ENCODE measurements at regions of chr14 and their contacts with region 1.

Region 1: DNA sequence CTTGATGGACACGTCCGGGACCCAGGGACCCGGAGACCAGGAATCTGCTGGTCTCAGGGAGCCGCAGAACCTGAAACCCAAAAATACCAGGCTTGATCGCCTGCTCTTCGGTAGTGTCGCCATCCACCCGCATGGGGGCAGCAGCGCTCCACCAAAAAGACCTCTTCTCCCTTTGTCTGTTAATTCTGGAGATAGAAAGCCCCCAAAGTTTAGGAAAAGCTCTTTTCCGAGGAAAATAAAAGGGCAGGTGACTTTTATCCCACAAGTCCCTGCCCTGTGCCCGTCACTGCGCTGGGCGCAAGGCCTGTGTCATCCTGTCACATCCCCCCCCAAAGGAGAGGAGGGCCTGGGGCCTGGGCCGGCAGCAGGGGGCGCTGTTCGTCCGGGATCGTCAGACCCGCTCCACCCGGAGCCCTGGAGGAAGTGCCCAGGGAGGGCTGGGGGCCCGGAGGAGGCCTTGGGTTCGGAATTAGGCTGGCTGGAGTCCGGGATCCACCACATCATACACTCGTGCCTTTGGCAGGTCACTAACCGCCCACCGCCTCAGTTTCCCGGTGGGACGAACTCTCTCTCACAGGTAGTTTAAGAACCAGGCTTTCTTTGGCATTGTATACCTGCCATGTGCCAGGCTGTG is 31.9 kb downstream of the DAD1 start:
- DNase-seq: peak; percentile 90
- ATAC-seq: peak; percentile 90

Region 2: GRCh38 chr14:22391912-22392421 is 165.1 kb before region 1 on chr14:
- intact Hi-C with region 1: loop called (anchors 10 kb)
- DNase-seq: peak; percentile 51
- ATAC-seq: peak; percentile 83

Region 3: DNA sequence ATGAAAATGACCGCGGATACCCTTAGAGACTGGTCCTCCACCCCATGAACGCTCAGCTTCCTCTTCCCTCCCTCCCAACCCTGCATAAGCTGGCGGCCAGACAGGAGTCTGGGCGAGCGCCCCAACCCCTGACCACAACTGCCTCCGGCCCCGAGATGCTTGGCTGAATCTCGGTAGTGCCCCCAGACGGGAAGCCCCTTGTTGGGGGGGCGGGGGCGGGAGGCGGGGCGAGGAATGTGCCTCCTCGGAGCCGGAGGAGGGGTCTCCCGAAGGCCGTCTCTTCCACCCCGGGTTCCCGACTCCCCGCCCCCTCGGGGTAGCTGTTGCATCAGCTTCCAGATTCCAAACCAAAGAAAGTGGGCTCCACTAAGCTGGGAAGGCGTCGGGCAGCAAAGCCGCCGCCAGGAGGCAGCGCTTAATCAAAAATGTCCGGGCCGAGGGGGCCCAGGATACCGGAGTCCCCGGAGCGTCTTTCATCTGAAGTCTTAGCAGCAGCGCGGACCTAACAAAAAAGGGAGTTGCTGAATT is 265.5 kb after region 1 on chr14:
- intact Hi-C with region 1: loop called (anchors 10 kb)
- DNase-seq: peak; percentile 87
- ATAC-seq: peak; percentile 88

Region 4: GRCh38 chr14:22852940-22853767 is 296.0 kb after region 1 on chr14:
- intact Hi-C with region 1: loop called (anchors 10 kb)
- DNase-seq: peak; percentile 94
- ATAC-seq: peak; percentile 58

Measured in left ventricle myocardium superior (tissue), 1 donor.